Mammary epithelial cell (primary cell): ENCODE measurements at regions of chr12 and their contacts with region 1.

Region 1: GRCh38 chr12:56359851-56360767 is at the start of gene STAT2:
- DNase-seq: peak; percentile 100
- H3K4me3 ChIP-seq: peak within 1 kb of the TSS; percentile 71 to 85 (median 83)
- H3K27ac ChIP-seq: peak within 1 kb of the TSS; percentile 95
- H3K4me1 ChIP-seq: peaks cover 12% of the 10 kb centered on the region
- H3K27me3 ChIP-seq: no peaks in the 10 kb centered on the region
- CTCF ChIP-seq: no peak
- total RNA-seq, gene STAT2: 93.1 to 231 TPM

Region 2: DNA sequence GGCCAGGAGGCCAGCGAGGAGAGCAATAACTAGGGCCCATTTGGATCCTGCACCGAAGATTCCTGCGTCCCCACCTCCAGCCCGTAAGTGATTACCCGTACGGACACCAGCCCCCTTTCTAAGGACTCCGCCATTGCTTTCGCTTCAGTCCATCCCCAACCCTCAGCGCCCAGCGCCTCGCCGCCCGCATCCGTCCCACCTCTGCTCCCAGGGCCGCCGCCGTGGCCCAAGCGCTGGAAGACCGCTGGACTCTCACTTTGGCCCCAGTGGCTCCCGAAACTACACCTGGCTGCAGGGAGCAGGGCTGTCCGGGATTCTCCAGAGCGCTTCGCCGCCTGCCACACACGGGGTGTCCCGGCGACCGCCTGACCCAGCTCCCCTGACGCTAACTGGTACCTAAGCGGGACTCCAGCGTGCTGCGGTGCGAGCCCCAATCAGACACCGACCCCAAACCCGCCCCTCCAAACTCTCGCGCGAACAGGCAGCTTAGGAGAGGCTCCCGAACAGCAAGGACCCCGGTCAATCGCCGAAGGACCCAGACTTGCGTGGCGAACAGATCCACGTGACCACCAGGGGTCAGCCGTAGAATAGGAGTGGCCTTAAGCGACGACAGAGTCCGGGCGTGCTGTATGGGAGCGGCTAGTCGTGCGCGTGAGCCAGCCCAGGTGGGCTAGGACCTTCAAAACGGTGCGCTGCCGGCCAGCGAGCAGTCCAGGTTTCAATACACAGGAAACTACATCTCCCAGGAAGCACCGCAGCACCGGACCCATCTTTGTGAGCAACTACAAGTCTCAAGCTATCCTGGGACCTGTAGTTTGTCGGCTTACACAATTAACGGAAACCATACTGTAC is 44.3 kb before region 1 on chr12 and contains the start of gene CNPY2:
- CTCF ChIA-PET with region 1: no interaction called
- dilution Hi-C with region 1: loop called (anchors 5 kb)
- in situ Hi-C with region 1: no loop called
- intact Hi-C with region 1: loop called (anchors 1 kb)
- DNase-seq: peak; percentile 99
- H3K4me3 ChIP-seq: peak within 1 kb of the TSS; percentile 94 to 96 (median 95)
- H3K27ac ChIP-seq: peak within 1 kb of the TSS; percentile 89
- H3K4me1 ChIP-seq: peaks cover 17% of the 10 kb centered on the region
- H3K27me3 ChIP-seq: no peaks in the 10 kb centered on the region
- CTCF ChIP-seq: peak in 1 of 2 donors; percentile 18
- total RNA-seq, gene CNPY2: 49.3 to 114 TPM

Region 3: DNA sequence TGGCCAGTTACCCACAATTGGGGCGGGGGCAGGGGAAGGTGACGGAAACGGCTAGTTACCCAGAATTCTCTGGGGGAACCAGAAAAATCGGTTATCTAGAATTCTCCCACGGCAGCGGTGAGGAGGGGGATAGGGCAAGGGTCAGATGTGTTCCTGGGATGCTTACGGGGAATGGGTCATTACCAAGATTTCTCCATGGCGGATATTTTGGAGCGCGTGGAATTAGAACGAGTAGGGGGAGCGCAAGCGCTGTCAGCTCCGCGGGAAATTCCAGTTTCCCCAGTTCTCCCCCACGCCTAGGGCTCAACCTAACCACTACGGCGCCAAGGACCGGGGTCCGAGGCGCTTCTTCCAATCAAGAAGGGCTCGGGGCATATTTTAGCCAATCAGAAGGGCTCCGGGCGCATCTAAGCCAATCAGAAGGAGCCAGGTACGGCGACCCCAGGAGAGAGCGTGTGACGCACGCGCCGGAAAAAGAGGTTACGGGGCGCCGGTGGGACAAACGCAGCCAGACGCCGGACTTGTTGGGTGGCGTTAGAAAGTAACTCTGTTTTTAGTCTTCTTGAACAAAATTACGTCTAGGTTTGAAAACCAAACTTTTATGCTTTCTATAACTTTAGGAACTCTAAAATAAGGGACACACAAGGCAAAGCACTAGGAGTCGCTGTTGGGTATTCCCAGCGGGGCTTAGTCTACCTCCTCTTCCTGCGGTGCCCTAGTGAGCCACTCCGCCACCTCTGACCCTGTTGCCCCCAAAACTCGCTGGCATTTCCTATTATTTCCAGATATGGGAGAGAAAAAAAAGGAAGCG is 26.2 kb before region 1 on chr12 and contains the start of gene PAN2:
- CTCF ChIA-PET with region 1: interaction called, 6 read pairs
- dilution Hi-C with region 1: no loop called
- in situ Hi-C with region 1: no loop called
- intact Hi-C with region 1: loop called (anchors 1 kb)
- DNase-seq: peak; percentile 98
- H3K4me3 ChIP-seq: peak within 1 kb of the TSS; percentile 52 to 72 (median 61)
- H3K27ac ChIP-seq: peak within 1 kb of the TSS; percentile 98
- H3K4me1 ChIP-seq: peaks cover 20% of the 10 kb centered on the region
- H3K27me3 ChIP-seq: no peaks in the 10 kb centered on the region
- CTCF ChIP-seq: peak; percentile 57 to 79
- total RNA-seq, gene PAN2: 21.0 to 50.8 TPM